ENCODE measurements at regions of chr6 and their contacts with region 1.

Region 1: DNA sequence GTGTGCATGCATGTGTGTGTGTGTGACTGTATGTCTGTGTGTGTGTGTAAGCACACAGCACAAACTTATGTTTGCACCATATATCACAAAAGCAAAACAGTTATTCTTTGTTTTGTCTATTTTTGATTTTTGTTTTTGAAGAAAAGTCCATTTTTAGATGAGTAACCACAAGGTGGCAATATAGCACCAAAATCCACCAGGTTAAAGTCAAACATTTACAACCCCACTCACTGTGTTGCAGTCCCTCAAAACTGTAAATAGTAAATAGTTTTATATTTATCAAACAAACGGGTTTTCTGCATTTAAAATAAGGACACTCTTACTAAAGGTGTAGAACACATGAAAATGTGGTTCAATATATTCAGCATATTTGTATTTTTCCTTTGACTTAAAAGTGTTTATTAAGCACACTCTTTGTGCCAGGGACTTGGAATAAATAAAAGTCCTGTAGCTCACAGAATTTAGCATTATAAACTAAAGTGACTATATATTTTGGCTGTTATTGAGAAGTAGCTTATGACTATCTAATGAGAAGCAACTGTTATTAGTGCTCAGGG is 118.5 kb downstream of the GFRAL start:
- DNase-seq: no peak

Region 2: GRCh38 chr6:55176958-55177357 is 268.8 kb before region 1 on chr6:
- intact Hi-C with region 1: no loop called
- DNase-seq: no peak

Region 3: GRCh38 chr6:55469951-55470366 is 24.2 kb after region 1 on chr6:
- intact Hi-C with region 1: no loop called
- DNase-seq: no peak

Region 4: GRCh38 chr6:55886185-55886836 is 440.6 kb after region 1 on chr6:
- intact Hi-C with region 1: loop called (anchors 2 kb)
- DNase-seq: no peak

Region 5: GRCh38 chr6:55953335-55953734 is 507.6 kb after region 1 on chr6:
- intact Hi-C with region 1: loop called (anchors 5 kb)
- DNase-seq: no peak

Measured in posterior cingulate gyrus (tissue), 11 donors.